Heart left ventricle (tissue), 16 donors: ENCODE measurements at regions of chr11 and their contacts with region 1.

Region 1: GRCh38 chr11:102868339-102868738 is 6.4 kb downstream of the MMP12 start:
- DNase-seq: no peak
- ATAC-seq: no peak
- H3K4me3 ChIP-seq: no peak overlapping the region
- H3K27ac ChIP-seq: peak overlapping the region in 1 of 12 donors; percentile 26
- H3K4me1 ChIP-seq: no peaks in the 10 kb centered on the region
- H3K27me3 ChIP-seq: no peaks in the 10 kb centered on the region
- CTCF ChIP-seq: no peak
- POLR2A ChIP-seq: no peak

Region 2: GRCh38 chr11:102017026-102017425 is 851.3 kb before region 1 on chr11:
- intact Hi-C with region 1: no loop called
- DNase-seq: no peak
- ATAC-seq: no peak
- H3K4me3 ChIP-seq: no peak overlapping the region
- H3K27ac ChIP-seq: no peak overlapping the region
- H3K4me1 ChIP-seq: no peaks in the 10 kb centered on the region
- H3K27me3 ChIP-seq: no peaks in the 10 kb centered on the region
- CTCF ChIP-seq: no peak
- POLR2A ChIP-seq: no peak

Region 3: GRCh38 chr11:102757823-102758549 is 110.4 kb before region 1 on chr11:
- intact Hi-C with region 1: no loop called
- DNase-seq: no peak
- ATAC-seq: peak in 1 of 4 donors; percentile 30
- H3K4me3 ChIP-seq: no peak overlapping the region
- H3K27ac ChIP-seq: no peak overlapping the region
- H3K4me1 ChIP-seq: peaks cover 0 to 29% (median 0%) of the 10 kb centered on the region in 12 donors
- H3K27me3 ChIP-seq: peaks cover 0 to 35% (median 0%) of the 10 kb centered on the region in 9 donors
- CTCF ChIP-seq: no peak
- POLR2A ChIP-seq: no peak

Region 4: GRCh38 chr11:102891736-102892135 is 23.4 kb after region 1 on chr11:
- intact Hi-C with region 1: loop called in 1 of 10 experiments (anchors 1 kb)
- DNase-seq: no peak
- ATAC-seq: no peak
- H3K4me3 ChIP-seq: no peak overlapping the region
- H3K27ac ChIP-seq: no peak overlapping the region
- H3K4me1 ChIP-seq: no peaks in the 10 kb centered on the region
- H3K27me3 ChIP-seq: peaks cover 0 to 3% (median 0%) of the 10 kb centered on the region in 9 donors
- CTCF ChIP-seq: no peak
- POLR2A ChIP-seq: no peak